IMR-90 (cell line): ENCODE measurements at regions of chr5 and their contacts with region 1.

Region 1: GRCh38 chr5:77491783-77492652 is at the start of gene WDR41:
- DNase-seq: peak; percentile 97
- ATAC-seq: peak; percentile 96
- H3K4me3 ChIP-seq: peak within 1 kb of the TSS; percentile 88
- H3K27ac ChIP-seq: peak within 1 kb of the TSS; percentile 79
- H3K4me1 ChIP-seq: peaks cover 2% of the 10 kb centered on the region
- H3K27me3 ChIP-seq: no peaks in the 10 kb centered on the region; the same call in 1 of the 2 replicates
- CTCF ChIP-seq: peak; percentile 92
- POLR2A ChIP-seq: peak; percentile 73
- RAD21 ChIP-seq: peak; percentile 83
- total RNA-seq, gene WDR41: 72.1 and 104 TPM in 2 replicates

Region 2: GRCh38 chr5:76608833-76609232 is 883.2 kb before region 1 on chr5:
- CTCF ChIA-PET with region 1: no interaction called
- POLR2A ChIA-PET with region 1: no interaction called
- dilution Hi-C with region 1: no loop called
- in situ Hi-C with region 1: no loop called
- intact Hi-C with region 1: loop called (anchors 5 kb)
- DNase-seq: peak; percentile 96
- ATAC-seq: peak; percentile 46; the same call in 1 of the 2 replicates
- H3K4me3 ChIP-seq: no peak overlapping the region
- H3K27ac ChIP-seq: no peak overlapping the region
- H3K4me1 ChIP-seq: peaks cover 11% of the 10 kb centered on the region
- H3K27me3 ChIP-seq: no peaks in the 10 kb centered on the region
- CTCF ChIP-seq: no peak
- POLR2A ChIP-seq: no peak
- RAD21 ChIP-seq: no peak

Region 3: DNA sequence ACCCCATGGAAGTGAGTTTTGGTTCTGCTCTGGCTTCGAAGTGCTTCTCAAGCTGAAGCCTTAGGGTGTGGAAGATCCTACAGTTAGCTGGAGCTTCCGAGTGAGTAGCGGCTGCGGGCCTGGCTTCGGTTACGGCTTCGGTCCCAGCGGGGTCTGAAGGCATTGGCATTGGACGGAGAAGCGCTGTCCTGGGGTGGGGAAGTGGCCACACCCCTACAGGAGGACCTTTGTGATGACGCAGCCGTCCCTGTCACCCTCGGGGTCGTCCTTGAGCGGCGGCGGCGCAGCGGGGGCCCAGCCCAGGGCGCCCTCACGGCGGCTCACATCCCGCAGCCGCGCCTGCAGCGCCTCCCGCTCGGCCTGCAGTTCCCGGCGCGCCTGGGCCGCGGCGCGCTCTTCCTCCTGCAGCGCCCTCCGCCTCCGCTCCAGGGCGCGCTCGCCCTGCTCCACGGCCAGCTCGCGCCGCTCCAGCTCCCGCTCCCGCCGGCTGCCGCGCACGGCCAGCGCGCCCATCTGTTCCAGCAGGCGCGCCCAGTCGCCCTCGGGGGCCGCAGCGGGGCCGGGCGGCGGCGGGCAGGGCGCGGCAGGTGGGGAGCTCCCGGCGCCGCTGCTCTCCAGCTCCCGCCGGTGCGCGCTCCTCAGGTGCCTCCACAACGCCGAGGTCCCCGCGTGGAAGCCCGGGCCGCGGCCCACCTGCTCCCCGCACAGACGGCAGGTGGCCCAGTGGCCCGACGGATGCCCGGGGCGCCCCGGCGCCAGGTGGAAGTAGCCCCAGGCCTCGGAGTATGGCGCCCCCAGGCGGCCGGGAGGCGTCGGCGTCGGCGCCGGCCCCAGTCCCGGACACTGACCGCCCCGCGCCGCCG is 414.8 kb before region 1 on chr5:
- CTCF ChIA-PET with region 1: interaction called, 5 read pairs
- POLR2A ChIA-PET with region 1: no interaction called
- dilution Hi-C with region 1: no loop called
- in situ Hi-C with region 1: no loop called
- intact Hi-C with region 1: loop called (anchors 5 kb)
- DNase-seq: peak; percentile 58
- ATAC-seq: peak; percentile 81
- H3K4me3 ChIP-seq: peak overlapping the region; percentile 41
- H3K27ac ChIP-seq: no peak overlapping the region
- H3K4me1 ChIP-seq: no peaks in the 10 kb centered on the region; the same call in 1 of the 2 replicates
- H3K27me3 ChIP-seq: no peaks in the 10 kb centered on the region
- CTCF ChIP-seq: peak; percentile 53
- POLR2A ChIP-seq: no peak
- RAD21 ChIP-seq: peak; percentile 46

Region 4: DNA sequence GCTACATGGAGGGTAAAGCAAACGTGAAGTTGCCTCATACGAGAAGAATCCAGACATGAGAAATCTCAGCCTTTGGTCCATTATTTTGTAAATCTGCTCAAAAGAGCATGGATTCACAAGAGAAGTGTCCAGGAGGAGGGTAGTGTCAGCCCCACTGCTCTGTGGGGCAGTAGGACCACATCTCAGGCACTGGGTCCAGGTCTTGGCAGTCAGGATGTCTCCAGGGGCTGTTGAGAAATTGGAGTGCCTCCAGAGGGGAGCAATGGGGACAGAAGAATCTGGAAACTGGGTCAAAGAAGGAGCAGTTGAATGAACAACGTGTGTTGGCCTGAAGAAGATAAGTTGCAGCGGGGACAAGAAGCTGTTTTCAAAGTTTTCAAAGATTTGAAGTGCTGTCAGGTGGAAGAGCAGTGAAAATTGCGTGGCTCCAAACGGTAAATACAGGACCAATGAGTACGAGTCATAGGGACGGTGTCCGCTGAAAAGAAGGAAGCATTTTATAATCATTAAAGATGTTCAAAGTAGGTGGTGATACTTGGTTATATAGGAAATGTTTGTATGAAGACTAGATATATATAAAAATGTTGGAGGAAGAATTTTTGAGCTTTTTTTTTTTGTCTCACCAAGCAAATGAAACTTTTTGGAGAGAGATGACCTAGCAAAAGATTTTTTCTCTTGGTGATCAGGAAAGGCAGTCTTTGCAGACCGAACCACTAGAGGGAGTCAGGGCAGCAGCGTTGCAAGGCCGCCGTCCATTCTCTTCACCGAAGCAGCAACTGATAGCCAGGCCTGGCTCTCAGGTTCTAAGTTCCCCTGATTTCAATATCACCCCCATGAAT is 347.8 kb before region 1 on chr5:
- CTCF ChIA-PET with region 1: interaction called, 13 read pairs
- POLR2A ChIA-PET with region 1: no interaction called
- dilution Hi-C with region 1: no loop called
- in situ Hi-C with region 1: loop called (anchors 5 kb)
- intact Hi-C with region 1: loop called (anchors 1 kb)
- DNase-seq: peak; percentile 79
- ATAC-seq: peak; percentile 98
- H3K4me3 ChIP-seq: no peak overlapping the region
- H3K27ac ChIP-seq: no peak overlapping the region
- H3K4me1 ChIP-seq: no peaks in the 10 kb centered on the region
- H3K27me3 ChIP-seq: peaks cover 2% of the 10 kb centered on the region; the same call in 1 of the 2 replicates
- CTCF ChIP-seq: peak; percentile 92
- POLR2A ChIP-seq: no peak
- RAD21 ChIP-seq: peak; percentile 95

Region 5: GRCh38 chr5:77282337-77283027 is 209.5 kb before region 1 on chr5:
- CTCF ChIA-PET with region 1: interaction called, 3 read pairs
- POLR2A ChIA-PET with region 1: no interaction called
- dilution Hi-C with region 1: no loop called
- in situ Hi-C with region 1: no loop called
- intact Hi-C with region 1: loop called (anchors 5 kb)
- DNase-seq: peak; percentile 88
- ATAC-seq: peak; percentile 98
- H3K4me3 ChIP-seq: no peak overlapping the region
- H3K27ac ChIP-seq: peak overlapping the region; percentile 46
- H3K4me1 ChIP-seq: peaks cover 7% of the 10 kb centered on the region
- H3K27me3 ChIP-seq: no peaks in the 10 kb centered on the region
- CTCF ChIP-seq: peak; percentile 45; the same call in 1 of the 2 replicates
- POLR2A ChIP-seq: no peak
- RAD21 ChIP-seq: no peak